ENCODE measurements at regions of chr5 and their contacts with region 1.

Region 1: GRCh38 chr5:55903121-55903701 is 52.1 kb downstream of the IL31RA start:
- DNase-seq: peak; percentile 62
- ATAC-seq: peak; percentile 96
- H3K4me3 Mint-ChIP-seq: peak overlapping the region; percentile 56
- H3K27ac Mint-ChIP-seq: peak overlapping the region; percentile 56
- H3K4me1 Mint-ChIP-seq: peaks cover 17% of the 10 kb centered on the region
- H3K27me3 Mint-ChIP-seq: peaks cover 8% of the 10 kb centered on the region
- CTCF ChIP-seq: no peak

Region 2: GRCh38 chr5:55711968-55712859 is 191.0 kb before region 1 on chr5 and contains the start of gene SLC38A9:
- CTCF ChIA-PET with region 1: no interaction called
- POLR2A ChIA-PET with region 1: no interaction called
- intact Hi-C with region 1: loop called (anchors 10 kb)
- DNase-seq: peak; percentile 91
- ATAC-seq: peak; percentile 100
- H3K4me3 Mint-ChIP-seq: peak within 1 kb of the TSS; percentile 100
- H3K27ac Mint-ChIP-seq: peak within 1 kb of the TSS; percentile 92
- H3K4me1 Mint-ChIP-seq: peaks cover 17% of the 10 kb centered on the region
- H3K27me3 Mint-ChIP-seq: no peaks in the 10 kb centered on the region
- CTCF ChIP-seq: no peak
- total RNA-seq, gene SLC38A9: 26.6 and 29.9 TPM in 2 replicates

Region 3: DNA sequence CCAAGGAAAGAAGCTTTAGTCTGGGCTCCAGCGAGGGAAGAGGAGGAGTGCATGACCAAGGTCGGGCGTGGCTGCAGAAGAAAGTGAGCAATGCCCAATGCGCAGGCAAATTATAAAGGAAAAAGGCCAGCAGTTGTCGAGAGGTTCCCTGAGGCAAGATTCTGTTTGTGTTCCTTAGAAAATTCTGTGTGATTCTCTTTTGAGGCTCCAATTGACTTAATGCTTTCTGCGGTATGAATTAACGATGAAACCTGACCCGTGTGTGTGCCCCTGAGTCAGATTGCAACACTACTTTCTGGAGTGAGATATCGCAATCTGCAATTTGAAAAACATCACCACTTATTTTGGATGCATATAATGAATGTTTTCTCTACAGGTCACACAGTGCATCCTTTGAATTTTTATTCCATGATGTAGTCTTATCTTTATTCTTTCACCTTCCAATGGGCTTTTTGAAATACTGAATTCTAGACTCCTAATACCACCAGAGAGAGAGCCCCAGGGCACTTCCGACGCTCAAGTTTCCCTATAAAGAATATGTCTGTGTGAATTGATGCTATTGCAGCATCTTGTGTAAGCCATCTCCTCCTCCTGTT is 209.4 kb after region 1 on chr5:
- CTCF ChIA-PET with region 1: no interaction called
- POLR2A ChIA-PET with region 1: no interaction called
- intact Hi-C with region 1: no loop called
- DNase-seq: no peak
- ATAC-seq: no peak
- H3K4me3 Mint-ChIP-seq: no peak overlapping the region
- H3K27ac Mint-ChIP-seq: no peak overlapping the region
- H3K4me1 Mint-ChIP-seq: no peaks in the 10 kb centered on the region
- H3K27me3 Mint-ChIP-seq: peaks cover under 1% of the 10 kb centered on the region
- CTCF ChIP-seq: no peak